Activated CD4-positive, alpha-beta T cell treated with anti-CD3 and anti-CD28 coated beads, Interleukin-2, amount 10 ng/mL, durations not matched to agents 24 days and 14 days (primary cell): ENCODE measurements at regions of chr3 and their contacts with region 1.

Region 1: DNA sequence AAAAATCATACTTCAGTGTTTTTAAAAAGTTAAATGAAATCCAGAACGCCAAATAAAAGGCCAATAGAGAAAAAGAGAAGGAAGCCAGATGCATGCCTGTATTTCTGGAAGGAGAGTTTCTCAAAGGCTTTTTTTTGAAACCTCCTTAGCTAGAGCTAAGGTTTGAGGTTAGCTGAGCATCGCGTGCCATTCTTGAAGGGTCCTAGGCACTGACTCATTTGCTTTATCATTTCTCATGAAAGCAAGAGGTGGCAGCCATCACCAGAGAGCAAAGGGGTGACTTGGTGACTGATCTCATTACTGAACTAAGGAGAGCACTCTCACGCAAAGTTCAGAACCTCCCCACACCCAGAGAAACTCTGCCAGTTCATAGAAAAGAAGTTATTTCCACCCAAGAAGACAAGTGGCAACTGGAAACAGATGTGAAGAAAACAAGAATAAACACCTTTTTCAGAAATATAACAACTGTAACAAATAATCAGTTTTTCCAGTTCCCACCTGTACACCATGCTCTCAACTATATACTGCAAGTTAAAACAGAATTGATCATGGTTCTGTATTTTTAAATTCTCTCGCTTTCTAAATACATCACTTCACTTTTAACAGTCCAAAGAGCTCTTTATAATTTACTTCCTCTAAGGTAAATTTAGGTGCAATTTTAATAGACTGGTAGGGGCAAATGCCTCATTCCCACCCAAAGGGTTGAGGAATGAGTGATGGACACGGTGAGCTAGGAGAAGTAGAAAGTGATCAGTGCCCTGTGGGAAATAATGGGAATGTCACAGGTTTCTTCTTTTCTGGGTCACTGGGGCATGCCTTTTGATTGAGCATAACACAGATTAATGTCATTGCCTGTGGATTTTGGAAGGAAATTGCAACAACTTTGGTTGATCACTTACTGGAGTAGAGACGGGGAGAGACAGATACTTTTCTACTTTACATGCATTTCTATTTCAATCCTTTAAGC is 24.7 kb downstream of the GPR15 start:
- DNase-seq: peak; percentile 94
- H3K4me3 Mint-ChIP-seq: peak overlapping the region; percentile 80
- H3K27ac Mint-ChIP-seq: peak overlapping the region; percentile 93
- H3K4me1 Mint-ChIP-seq: peaks cover 74% of the 10 kb centered on the region
- H3K27me3 Mint-ChIP-seq: no peaks in the 10 kb centered on the region

Region 2: GRCh38 chr3:97981886-97982285 is 574.6 kb before region 1 on chr3:
- intact Hi-C with region 1: loop called (anchors 5 kb)
- DNase-seq: peak; percentile 84
- H3K4me3 Mint-ChIP-seq: peak overlapping the region; percentile 60
- H3K27ac Mint-ChIP-seq: peak overlapping the region; percentile 82
- H3K4me1 Mint-ChIP-seq: peaks cover 40% of the 10 kb centered on the region
- H3K27me3 Mint-ChIP-seq: no peaks in the 10 kb centered on the region

Region 3: DNA sequence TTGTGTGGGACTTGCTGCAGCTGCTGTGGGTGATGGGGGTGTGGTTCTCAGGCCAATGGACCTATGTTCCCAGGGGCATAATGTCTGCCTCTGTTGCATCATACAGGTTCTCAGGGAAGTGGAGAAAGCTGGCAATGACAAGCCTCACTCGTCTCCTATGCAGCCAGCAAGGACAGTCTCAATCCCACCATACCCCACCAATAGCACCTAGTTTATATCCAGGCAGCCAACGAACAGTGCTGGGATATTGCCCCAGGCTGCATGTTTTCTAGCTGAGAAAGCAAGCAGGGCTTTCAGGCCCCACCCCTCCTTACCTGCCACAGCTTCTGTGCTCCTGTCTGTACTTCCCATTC is 73.3 kb before region 1 on chr3:
- intact Hi-C with region 1: no loop called
- DNase-seq: no peak
- H3K4me3 Mint-ChIP-seq: no peak overlapping the region
- H3K27ac Mint-ChIP-seq: no peak overlapping the region
- H3K4me1 Mint-ChIP-seq: peaks cover 2% of the 10 kb centered on the region
- H3K27me3 Mint-ChIP-seq: peaks cover 15% of the 10 kb centered on the region

Region 4: GRCh38 chr3:98497381-98497780 is 59.1 kb before region 1 on chr3 and contains the start of gene OR5K2:
- intact Hi-C with region 1: no loop called
- DNase-seq: no peak
- H3K4me3 Mint-ChIP-seq: no peak within 1 kb of the TSS
- H3K27ac Mint-ChIP-seq: no peak within 1 kb of the TSS
- H3K4me1 Mint-ChIP-seq: no peaks in the 10 kb centered on the region
- H3K27me3 Mint-ChIP-seq: peaks cover 17% of the 10 kb centered on the region
- total RNA-seq, gene OR5K2: not detected in 2 replicates

Region 5: DNA sequence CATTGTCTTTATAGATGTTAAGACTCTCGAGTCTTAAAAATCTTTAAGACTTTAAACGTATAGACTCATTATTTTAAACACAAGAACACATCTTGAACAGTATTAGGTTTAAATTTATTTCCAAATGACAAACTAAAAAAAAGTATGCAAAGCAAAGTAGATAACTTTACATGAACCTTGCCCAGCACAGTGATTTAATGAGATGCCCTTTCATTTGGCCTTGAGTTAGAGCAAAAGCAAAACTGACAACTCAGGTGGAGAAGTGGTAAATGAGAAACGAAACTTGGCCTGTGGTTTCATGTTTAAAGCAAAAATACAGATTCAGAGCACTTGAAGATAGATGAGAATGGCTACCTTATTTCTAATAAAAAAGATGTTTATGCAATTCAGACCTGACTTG is 16.1 kb before region 1 on chr3:
- intact Hi-C with region 1: loop called (anchors 1 kb)
- DNase-seq: peak; percentile 82
- H3K4me3 Mint-ChIP-seq: peak overlapping the region; percentile 45
- H3K27ac Mint-ChIP-seq: peak overlapping the region; percentile 46
- H3K4me1 Mint-ChIP-seq: peaks cover 50% of the 10 kb centered on the region
- H3K27me3 Mint-ChIP-seq: no peaks in the 10 kb centered on the region

Region 6: GRCh38 chr3:98545940-98546339 is 10.5 kb before region 1 on chr3:
- intact Hi-C with region 1: loop called (anchors 1 kb)
- DNase-seq: peak; percentile 82
- H3K4me3 Mint-ChIP-seq: peak overlapping the region; percentile 78
- H3K27ac Mint-ChIP-seq: peak overlapping the region; percentile 94
- H3K4me1 Mint-ChIP-seq: peaks cover 52% of the 10 kb centered on the region
- H3K27me3 Mint-ChIP-seq: no peaks in the 10 kb centered on the region

Region 7: GRCh38 chr3:98573181-98573728 is 16.8 kb after region 1 on chr3:
- intact Hi-C with region 1: loop called (anchors 2 kb)
- DNase-seq: peak; percentile 65
- H3K4me3 Mint-ChIP-seq: peak overlapping the region; percentile 59
- H3K27ac Mint-ChIP-seq: peak overlapping the region; percentile 75
- H3K4me1 Mint-ChIP-seq: peaks cover 49% of the 10 kb centered on the region
- H3K27me3 Mint-ChIP-seq: no peaks in the 10 kb centered on the region

Region 8: DNA sequence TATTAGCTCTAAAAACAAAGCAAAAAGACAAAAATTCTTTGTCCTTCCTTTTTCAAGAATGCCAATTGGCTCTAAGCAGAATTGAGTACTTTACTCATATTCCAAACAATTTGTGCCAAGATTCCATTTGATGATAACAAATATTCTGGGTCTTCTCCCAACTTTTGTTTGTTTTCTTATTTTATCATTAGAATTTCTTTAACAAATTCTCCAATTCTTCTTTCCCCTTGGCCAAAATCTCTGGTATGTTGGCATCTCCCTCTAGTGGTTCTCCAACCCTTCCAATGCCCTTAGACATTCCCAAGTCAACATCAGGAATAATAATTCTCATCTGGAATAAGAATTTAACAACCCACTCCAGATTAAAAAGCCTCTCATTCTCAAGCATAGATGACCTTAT is 31.6 kb after region 1 on chr3:
- intact Hi-C with region 1: no loop called
- DNase-seq: no peak
- H3K4me3 Mint-ChIP-seq: no peak overlapping the region
- H3K27ac Mint-ChIP-seq: no peak overlapping the region
- H3K4me1 Mint-ChIP-seq: peaks cover 44% of the 10 kb centered on the region
- H3K27me3 Mint-ChIP-seq: no peaks in the 10 kb centered on the region